ENCODE measurements at regions of chr12 and their contacts with region 1.

Region 1: DNA sequence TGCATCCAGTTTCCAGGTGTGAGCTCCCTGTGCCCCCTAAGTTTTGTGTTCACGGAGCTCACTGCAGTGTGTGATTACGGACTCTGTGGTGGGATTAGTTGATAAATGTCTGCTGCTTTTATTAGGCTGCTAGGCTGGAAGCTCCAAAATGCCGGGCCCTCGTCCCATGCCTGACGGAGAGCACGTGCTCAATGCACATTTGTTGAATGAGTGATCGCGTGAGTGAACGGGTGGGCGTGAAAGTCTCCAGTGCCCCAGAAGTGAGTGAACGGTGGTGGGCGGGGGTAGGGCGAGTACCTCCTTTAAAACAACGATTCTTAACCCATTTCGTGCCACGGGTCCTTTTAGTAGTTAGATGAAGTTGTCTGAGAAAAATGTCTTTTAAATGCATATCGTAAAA is 175.5 kb downstream of the AACS start:
- DNase-seq: no peak
- H3K4me3 ChIP-seq: no peak overlapping the region
- H3K27ac ChIP-seq: no peak overlapping the region
- H3K4me1 ChIP-seq: peaks cover 3% of the 10 kb centered on the region
- H3K27me3 ChIP-seq: no peaks in the 10 kb centered on the region
- CTCF ChIP-seq: no peak

Region 2: GRCh38 chr12:124979568-124979967 is 261.1 kb before region 1 on chr12:
- CTCF ChIA-PET with region 1: no interaction called
- POLR2A ChIA-PET with region 1: no interaction called
- intact Hi-C with region 1: no loop called
- DNase-seq: no peak
- H3K4me3 ChIP-seq: no peak overlapping the region
- H3K27ac ChIP-seq: no peak overlapping the region
- H3K4me1 ChIP-seq: no peaks in the 10 kb centered on the region
- H3K27me3 ChIP-seq: no peaks in the 10 kb centered on the region
- CTCF ChIP-seq: no peak

Region 3: GRCh38 chr12:125114365-125115141 is 126.2 kb before region 1 on chr12:
- CTCF ChIA-PET with region 1: no interaction called
- POLR2A ChIA-PET with region 1: no interaction called
- intact Hi-C with region 1: no loop called
- DNase-seq: no peak
- H3K4me3 ChIP-seq: no peak overlapping the region
- H3K27ac ChIP-seq: no peak overlapping the region
- H3K4me1 ChIP-seq: peaks cover 8% of the 10 kb centered on the region
- H3K27me3 ChIP-seq: no peaks in the 10 kb centered on the region
- CTCF ChIP-seq: no peak

Region 4: GRCh38 chr12:125470838-125471783 is 230.4 kb after region 1 on chr12:
- CTCF ChIA-PET with region 1: interaction called, 10 read pairs
- POLR2A ChIA-PET with region 1: no interaction called
- intact Hi-C with region 1: no loop called
- DNase-seq: no peak
- H3K4me3 ChIP-seq: no peak overlapping the region
- H3K27ac ChIP-seq: no peak overlapping the region
- H3K4me1 ChIP-seq: no peaks in the 10 kb centered on the region
- H3K27me3 ChIP-seq: peaks cover 39% of the 10 kb centered on the region
- CTCF ChIP-seq: no peak